HCT116 (cell line): ENCODE measurements at regions of chr3 and their contacts with region 1.

Region 1: GRCh38 chr3:17032407-17033034 is 147.8 kb downstream of the PLCL2 start:
- DNase-seq: peak; percentile 19
- ATAC-seq: peak; percentile 94
- H3K4me3 ChIP-seq: no peak overlapping the region
- H3K27ac ChIP-seq: no peak overlapping the region
- H3K4me1 ChIP-seq: no peaks in the 10 kb centered on the region
- H3K27me3 ChIP-seq: no peaks in the 10 kb centered on the region
- CTCF ChIP-seq: peak; percentile 57 to 75 (median 65); a peak in 5 of 6 replicates
- POLR2A ChIP-seq: no peak
- RAD21 ChIP-seq: peak; percentile 82

Region 2: DNA sequence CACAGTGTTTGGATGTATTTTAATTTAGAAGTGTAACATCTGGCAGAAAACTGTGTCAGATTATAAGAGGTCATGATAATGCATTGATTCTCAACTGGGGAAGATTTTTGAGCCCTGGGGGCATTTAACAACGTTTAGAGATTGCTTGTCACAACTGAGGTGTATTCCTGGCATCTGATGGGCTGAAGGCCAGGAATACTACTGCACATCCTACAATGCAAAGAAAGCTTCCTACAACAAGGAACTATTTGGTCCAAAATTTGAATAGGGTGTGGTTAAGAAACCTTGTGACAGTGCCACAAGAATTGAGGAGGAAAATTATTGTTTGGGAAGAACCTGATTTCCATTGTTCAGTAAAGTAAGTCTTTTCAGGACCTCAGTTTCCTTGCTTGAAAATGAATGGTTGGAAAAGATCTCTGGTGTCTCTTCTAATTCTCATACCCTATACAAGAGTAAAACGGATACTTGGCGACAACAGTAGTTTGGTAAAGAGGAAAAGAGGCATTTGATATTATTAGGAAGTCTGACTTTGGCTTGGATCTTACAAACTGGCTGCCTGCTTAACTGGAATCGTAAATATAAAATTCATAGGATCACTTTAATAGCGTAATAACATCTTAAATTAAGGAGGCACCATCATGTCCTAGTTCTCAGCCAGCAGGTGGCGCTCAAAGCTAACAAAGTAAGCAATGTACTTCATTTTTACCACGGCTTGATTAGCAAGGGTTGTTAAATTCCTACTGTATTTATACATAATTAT is 431.6 kb before region 1 on chr3:
- CTCF ChIA-PET with region 1: no interaction called
- POLR2A ChIA-PET with region 1: no interaction called
- RAD21 ChIA-PET with region 1: no interaction called
- intact Hi-C with region 1: loop called (anchors 2 kb)
- DNase-seq: peak; percentile 72
- ATAC-seq: peak; percentile 85
- H3K4me3 ChIP-seq: peak overlapping the region in 1 of 2 experiments; percentile 34; a peak in 1 of 4 replicates
- H3K27ac ChIP-seq: no peak overlapping the region
- H3K4me1 ChIP-seq: no peaks in the 10 kb centered on the region
- H3K27me3 ChIP-seq: no peaks in the 10 kb centered on the region
- CTCF ChIP-seq: peak; percentile 60 to 69 (median 69)
- POLR2A ChIP-seq: no peak
- RAD21 ChIP-seq: peak; percentile 92

Region 3: DNA sequence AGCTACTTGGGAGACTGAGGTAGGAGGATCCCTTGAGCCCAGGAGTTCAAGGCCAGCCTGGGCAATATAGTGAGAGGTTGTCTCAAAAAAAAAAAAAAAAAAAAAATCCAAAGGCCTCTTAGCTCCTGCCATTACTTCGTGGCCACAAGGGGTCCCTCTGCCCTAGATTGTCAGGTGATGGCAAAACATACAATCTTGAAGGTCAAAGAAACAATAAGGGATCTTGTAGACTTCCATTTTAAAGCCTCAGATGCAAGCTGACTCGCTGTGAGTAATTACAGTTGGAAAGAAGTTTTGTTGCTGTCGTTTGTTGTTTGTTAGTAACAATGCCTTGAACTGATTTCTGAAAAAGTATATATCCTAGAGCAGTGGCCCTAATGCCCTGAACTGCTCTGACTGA is 203.7 kb before region 1 on chr3:
- CTCF ChIA-PET with region 1: interaction called, 10 read pairs
- POLR2A ChIA-PET with region 1: no interaction called
- RAD21 ChIA-PET with region 1: interaction called, 3 read pairs
- intact Hi-C with region 1: loop called (anchors 5 kb)
- DNase-seq: peak; percentile 55
- ATAC-seq: peak; percentile 82
- H3K4me3 ChIP-seq: no peak overlapping the region
- H3K27ac ChIP-seq: no peak overlapping the region
- H3K4me1 ChIP-seq: peaks cover 0 to 5% of the 10 kb centered on the region in 2 experiments; a peak in 1 of 4 replicates
- H3K27me3 ChIP-seq: no peaks in the 10 kb centered on the region
- CTCF ChIP-seq: peak; percentile 60 to 66 (median 61); a peak in 5 of 6 replicates
- POLR2A ChIP-seq: no peak
- RAD21 ChIP-seq: peak; percentile 71

Region 4: DNA sequence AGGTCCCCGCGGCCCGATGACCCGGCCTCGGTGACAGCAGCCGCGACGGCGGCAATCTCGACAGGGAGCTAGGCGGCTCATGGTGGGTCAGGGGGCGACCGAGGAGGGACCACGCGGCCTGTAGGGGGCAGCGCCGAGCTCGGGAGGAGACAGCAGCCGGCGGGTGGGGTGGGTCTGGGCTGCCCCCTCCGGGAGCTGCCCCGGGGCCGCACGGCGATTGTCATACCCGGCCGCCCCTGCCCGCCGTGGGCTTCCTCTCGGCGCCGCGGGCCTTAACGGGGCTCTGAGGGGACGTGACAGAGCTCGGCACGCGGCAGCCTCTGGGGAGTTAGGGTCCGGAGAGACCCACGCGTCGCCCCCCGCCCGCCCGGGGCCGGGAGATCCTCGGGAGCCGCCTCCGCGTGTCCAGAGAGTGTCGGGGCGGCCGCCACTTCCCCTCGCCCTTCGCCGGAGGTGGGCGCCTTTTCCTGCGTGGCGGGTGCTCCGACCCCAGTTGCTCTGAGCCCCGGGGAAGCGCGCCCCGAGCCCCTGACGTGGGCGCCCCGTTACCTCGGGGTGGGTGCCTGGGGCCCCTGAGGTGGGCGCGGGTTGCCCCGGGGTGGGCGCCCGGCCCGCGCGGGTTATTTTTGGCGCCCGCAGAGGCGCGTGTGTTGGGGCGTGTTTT is 148.3 kb before region 1 on chr3:
- CTCF ChIA-PET with region 1: no interaction called
- POLR2A ChIA-PET with region 1: no interaction called
- RAD21 ChIA-PET with region 1: no interaction called
- intact Hi-C with region 1: loop called (anchors 10 kb)
- DNase-seq: no peak
- ATAC-seq: peak; percentile 78
- H3K4me3 ChIP-seq: peak overlapping the region; percentile 58 to 71
- H3K27ac ChIP-seq: peak overlapping the region; percentile 41
- H3K4me1 ChIP-seq: peaks cover 0 to 11% of the 10 kb centered on the region in 2 experiments; a peak in 2 of 4 replicates
- H3K27me3 ChIP-seq: no peaks in the 10 kb centered on the region
- CTCF ChIP-seq: peak; percentile 32 to 60 (median 56); a peak in 5 of 6 replicates
- POLR2A ChIP-seq: no peak
- RAD21 ChIP-seq: peak; percentile 55

Region 5: GRCh38 chr3:17044855-17045254 is 12.3 kb after region 1 on chr3:
- CTCF ChIA-PET with region 1: no interaction called
- POLR2A ChIA-PET with region 1: no interaction called
- RAD21 ChIA-PET with region 1: no interaction called
- intact Hi-C with region 1: no loop called
- DNase-seq: no peak
- ATAC-seq: no peak
- H3K4me3 ChIP-seq: no peak overlapping the region
- H3K27ac ChIP-seq: no peak overlapping the region
- H3K4me1 ChIP-seq: peaks cover 7 to 18% of the 10 kb centered on the region in 2 experiments
- H3K27me3 ChIP-seq: no peaks in the 10 kb centered on the region
- CTCF ChIP-seq: no peak
- POLR2A ChIP-seq: no peak
- RAD21 ChIP-seq: no peak

Region 6: GRCh38 chr3:17132286-17133120 is 100.0 kb after region 1 on chr3:
- CTCF ChIA-PET with region 1: no interaction called
- POLR2A ChIA-PET with region 1: no interaction called
- RAD21 ChIA-PET with region 1: no interaction called
- intact Hi-C with region 1: no loop called
- DNase-seq: no peak
- ATAC-seq: no peak
- H3K4me3 ChIP-seq: no peak overlapping the region
- H3K27ac ChIP-seq: no peak overlapping the region
- H3K4me1 ChIP-seq: no peaks in the 10 kb centered on the region
- H3K27me3 ChIP-seq: no peaks in the 10 kb centered on the region
- CTCF ChIP-seq: no peak
- POLR2A ChIP-seq: no peak
- RAD21 ChIP-seq: no peak

Region 7: GRCh38 chr3:17233398-17233800 is 200.9 kb after region 1 on chr3:
- CTCF ChIA-PET with region 1: no interaction called
- POLR2A ChIA-PET with region 1: no interaction called
- RAD21 ChIA-PET with region 1: no interaction called
- intact Hi-C with region 1: loop called (anchors 2 kb)
- DNase-seq: peak; percentile 52
- ATAC-seq: peak; percentile 99
- H3K4me3 ChIP-seq: no peak overlapping the region
- H3K27ac ChIP-seq: no peak overlapping the region
- H3K4me1 ChIP-seq: no peaks in the 10 kb centered on the region
- H3K27me3 ChIP-seq: no peaks in the 10 kb centered on the region
- CTCF ChIP-seq: peak; percentile 59 to 79 (median 75)
- POLR2A ChIP-seq: no peak
- RAD21 ChIP-seq: peak; percentile 85